Caco-2 (cell line): ENCODE measurements at regions of chr3 and their contacts with region 1.

Region 1: DNA sequence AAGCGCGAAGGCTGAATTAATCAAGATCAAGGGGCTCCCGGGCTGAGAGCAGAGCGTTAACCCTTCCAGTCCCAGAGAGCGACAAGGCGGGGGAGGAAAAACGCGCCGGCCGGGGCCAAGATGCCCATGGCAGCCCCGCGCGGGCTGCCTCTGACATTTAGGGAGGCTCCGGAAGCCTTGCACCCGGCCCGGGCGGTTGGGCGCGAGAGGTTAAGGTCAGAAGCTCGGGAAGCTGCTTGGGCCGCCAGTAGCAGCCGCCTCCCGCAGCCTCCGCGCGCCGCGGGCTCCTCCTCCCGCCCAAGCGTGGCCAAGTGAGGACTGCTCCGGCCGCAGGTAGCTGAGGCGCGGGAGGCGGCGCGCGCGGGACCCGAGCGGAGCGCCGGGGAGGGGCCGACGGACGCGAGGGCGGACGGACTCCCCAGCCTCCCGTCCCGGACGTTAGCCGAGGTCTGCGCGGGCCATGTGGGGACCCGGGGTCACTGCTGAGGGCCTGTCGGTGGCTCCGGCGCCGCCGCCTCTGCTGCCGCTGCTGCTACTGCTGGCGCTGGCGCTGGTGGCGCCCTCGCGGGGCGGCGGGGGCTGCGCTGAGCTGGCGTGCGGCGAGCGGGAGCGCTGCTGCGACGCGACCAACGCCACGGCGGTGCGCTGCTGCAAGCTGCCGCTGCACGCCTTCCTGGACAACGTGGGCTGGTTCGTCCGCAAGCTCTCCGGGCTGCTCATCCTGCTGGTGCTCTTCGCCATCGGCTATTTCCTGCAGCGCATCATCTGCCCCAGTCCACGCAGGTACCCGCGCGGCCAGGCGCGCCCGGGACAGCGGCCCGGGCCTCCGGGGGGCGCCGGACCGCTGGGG is at the start of gene C3orf80:
- DNase-seq: peak; percentile 67 to 80
- H3K4me3 ChIP-seq: peak within 1 kb of the TSS; percentile 86
- H3K4me3 Mint-ChIP-seq: peak within 1 kb of the TSS; percentile 90
- H3K27ac Mint-ChIP-seq: peak within 1 kb of the TSS; percentile 70
- H3K4me1 ChIP-seq: peaks cover 10% of the 10 kb centered on the region
- H3K4me1 Mint-ChIP-seq: no peaks in the 10 kb centered on the region
- H3K27me3 ChIP-seq: no peaks in the 10 kb centered on the region
- H3K27me3 Mint-ChIP-seq: no peaks in the 10 kb centered on the region
- CTCF ChIP-seq: peak; percentile 9 to 21
- total RNA-seq, gene C3orf80: 3.2 and 3.7 TPM in 2 replicates

Region 2: GRCh38 chr3:160257606-160258005 is 32.2 kb after region 1 on chr3:
- CTCF ChIA-PET with region 1: no interaction called
- POLR2A ChIA-PET with region 1: interaction called, 3 read pairs
- intact Hi-C with region 1: loop called (anchors 1 kb)
- DNase-seq: no peak
- H3K4me3 ChIP-seq: no peak overlapping the region
- H3K4me3 Mint-ChIP-seq: no peak overlapping the region
- H3K27ac Mint-ChIP-seq: no peak overlapping the region
- H3K4me1 ChIP-seq: peaks cover 3% of the 10 kb centered on the region; the same call in 1 of the 2 replicates
- H3K4me1 Mint-ChIP-seq: peaks cover 4% of the 10 kb centered on the region
- H3K27me3 ChIP-seq: no peaks in the 10 kb centered on the region
- H3K27me3 Mint-ChIP-seq: no peaks in the 10 kb centered on the region
- CTCF ChIP-seq: no peak

Region 3: GRCh38 chr3:160343132-160343531 is 117.7 kb after region 1 on chr3:
- CTCF ChIA-PET with region 1: no interaction called
- POLR2A ChIA-PET with region 1: no interaction called
- intact Hi-C with region 1: loop called (anchors 2 kb)
- DNase-seq: no peak
- H3K4me3 ChIP-seq: no peak overlapping the region
- H3K4me3 Mint-ChIP-seq: no peak overlapping the region
- H3K27ac Mint-ChIP-seq: no peak overlapping the region
- H3K4me1 ChIP-seq: no peaks in the 10 kb centered on the region
- H3K4me1 Mint-ChIP-seq: no peaks in the 10 kb centered on the region
- H3K27me3 ChIP-seq: no peaks in the 10 kb centered on the region
- H3K27me3 Mint-ChIP-seq: no peaks in the 10 kb centered on the region
- CTCF ChIP-seq: peak; percentile 16 to 31

Region 4: DNA sequence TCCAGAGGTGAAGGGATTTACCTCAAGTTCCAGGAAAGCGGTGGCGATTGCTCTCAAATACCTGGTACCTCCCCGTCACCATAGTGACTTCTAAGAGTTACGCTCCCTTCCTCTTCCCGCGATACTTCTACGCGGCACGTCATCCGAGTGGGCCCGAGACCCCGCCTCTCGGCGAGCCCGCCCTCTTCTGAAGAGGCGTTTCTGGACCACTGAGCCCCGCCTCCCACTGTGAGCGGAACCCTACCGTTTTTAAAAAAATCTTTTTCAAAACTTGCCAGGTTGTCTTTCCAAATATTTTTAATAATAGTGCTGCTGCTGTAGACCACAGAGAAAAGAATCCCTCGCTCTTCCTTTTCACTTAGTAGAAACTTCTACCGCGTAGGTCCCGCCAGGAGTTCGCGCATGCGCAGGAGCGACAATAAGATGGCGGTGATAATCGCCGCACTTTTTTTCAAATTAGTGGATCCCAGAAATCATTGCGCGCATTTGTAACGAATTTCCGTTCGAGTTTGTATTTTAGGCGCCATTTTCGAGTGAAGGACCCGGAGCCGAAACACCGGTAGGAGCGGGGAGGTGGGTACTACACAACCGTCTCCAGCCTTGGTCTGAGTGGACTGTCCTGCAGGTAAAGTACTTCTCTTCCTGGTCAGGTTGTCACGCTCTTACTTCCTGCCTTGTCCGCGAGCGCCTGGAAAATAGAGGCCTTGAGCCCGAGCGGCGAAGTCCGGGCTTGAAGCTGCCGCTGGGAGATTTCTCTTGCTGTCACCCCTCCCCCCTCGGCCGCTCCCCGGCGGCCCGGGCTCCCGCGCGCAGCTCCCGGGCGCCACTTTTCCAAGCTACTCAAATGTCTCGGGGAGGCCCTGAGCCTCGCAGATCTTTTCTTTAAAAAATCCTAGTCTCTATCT is 174.0 kb after region 1 on chr3 and contains the starts of genes IFT80 and SMC4:
- CTCF ChIA-PET with region 1: no interaction called
- POLR2A ChIA-PET with region 1: interaction called, 3 read pairs
- intact Hi-C with region 1: loop called (anchors 2 kb)
- DNase-seq: peak; percentile 95 to 96
- H3K4me3 ChIP-seq: peak within 1 kb of the TSS; percentile 96
- H3K4me3 Mint-ChIP-seq: peak within 1 kb of the TSS; percentile 97
- H3K27ac Mint-ChIP-seq: peak within 1 kb of the TSS; percentile 99
- H3K4me1 ChIP-seq: peaks cover 10% of the 10 kb centered on the region
- H3K4me1 Mint-ChIP-seq: peaks cover 6% of the 10 kb centered on the region
- H3K27me3 ChIP-seq: no peaks in the 10 kb centered on the region
- H3K27me3 Mint-ChIP-seq: no peaks in the 10 kb centered on the region
- CTCF ChIP-seq: no peak
- total RNA-seq, gene IFT80: 19.3 and 24.9 TPM in 2 replicates
- total RNA-seq, gene SMC4: 133 and 136 TPM in 2 replicates